ENCODE measurements at regions of chr1 and their contacts with region 1.

Region 1: DNA sequence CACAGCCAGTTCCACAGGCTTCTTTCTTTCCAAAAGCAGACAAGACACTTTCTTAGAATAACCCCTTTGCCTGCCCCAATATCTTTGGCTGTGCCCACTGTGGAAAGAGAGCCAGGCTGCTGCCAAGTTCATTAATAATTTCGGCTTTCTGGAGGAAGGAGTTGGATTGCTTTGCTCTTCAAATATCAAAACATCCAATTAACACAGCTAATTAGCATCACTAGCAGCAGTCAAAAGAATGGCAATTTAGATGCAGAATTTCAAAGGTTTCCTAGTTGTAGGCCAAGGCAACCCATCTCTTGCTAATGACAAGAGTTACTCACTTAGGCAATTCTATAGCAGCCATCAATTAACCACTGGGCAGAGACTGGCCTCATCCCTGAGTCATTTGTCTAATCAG is 91.0 kb upstream of the SPATA6 start:
- DNase-seq: no peak
- H3K4me3 ChIP-seq: no peak overlapping the region
- CTCF ChIP-seq: no peak

Region 2: DNA sequence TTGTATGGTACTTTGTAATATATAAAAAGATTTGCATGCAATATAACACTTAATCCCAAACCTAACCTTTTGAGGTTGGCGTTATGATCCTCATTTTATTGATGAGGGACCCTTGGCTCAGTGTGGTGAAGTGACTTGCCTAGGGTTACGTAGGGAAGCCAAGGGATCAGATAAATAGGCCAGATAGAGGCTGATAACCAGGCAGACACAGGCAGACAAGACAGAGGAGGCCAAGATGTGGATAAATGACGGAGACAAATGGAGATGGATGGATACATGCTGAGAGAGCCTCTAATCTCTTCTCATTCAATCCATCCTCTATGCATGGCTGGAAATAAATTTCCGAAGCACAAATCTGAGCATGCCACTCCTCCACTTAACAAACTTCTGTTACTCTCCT is 45.9 kb after region 1 on chr1:
- in situ Hi-C with region 1: loop called (anchors 5 kb)
- DNase-seq: no peak
- H3K4me3 ChIP-seq: no peak overlapping the region
- CTCF ChIP-seq: no peak